ENCODE measurements at regions of chr5 and their contacts with region 1.

Region 1: DNA sequence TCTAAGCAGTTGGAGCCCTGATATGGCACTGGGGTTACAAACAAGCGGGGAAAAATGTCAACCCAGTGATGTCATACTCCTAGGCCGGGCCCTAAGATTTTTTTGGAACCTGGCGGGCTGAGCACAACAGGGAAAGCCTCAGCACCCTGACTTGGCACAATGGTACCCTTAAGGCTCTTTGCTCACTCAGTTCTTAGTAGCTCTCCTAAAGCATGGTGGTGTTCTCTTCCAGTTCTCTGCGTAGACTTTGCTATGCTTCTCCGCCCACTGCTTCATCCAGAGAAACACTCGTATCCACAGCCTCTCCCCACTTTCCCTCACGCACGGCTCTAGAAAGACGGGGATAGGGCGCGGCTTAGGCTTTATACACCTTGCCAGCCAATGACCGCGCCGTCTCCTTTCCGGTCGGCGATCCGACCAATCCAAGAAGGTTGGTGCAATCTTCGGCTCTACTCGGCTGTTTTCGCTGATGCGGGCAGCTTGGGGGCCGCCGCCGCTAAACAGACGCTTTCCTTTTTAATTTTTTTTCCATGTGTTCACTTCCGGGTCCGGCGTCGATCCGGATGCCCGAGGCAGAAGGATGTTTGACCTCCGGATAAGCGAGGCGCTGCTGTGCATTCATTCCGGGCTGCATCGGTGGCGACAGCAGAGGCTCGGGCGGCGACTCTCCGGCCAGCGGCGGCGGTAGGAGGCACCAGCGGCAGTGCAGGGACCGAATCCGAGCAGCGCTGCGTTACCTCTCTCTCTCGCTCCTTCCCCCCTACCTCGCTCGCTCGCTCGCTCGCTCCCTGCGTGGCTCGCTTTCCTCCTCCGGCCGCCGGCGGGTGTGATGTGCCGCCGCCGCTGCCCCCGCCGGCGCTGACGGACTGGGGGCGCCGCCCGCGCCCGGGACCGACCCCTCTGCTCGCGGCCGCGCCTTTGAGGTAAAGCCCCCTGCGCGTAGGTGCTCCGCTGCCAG is at the start of gene CSNK1G3:
- DNase-seq: peak; percentile 88 to 95
- ATAC-seq: peak; percentile 86 to 94 (median 89)
- H3K4me3 ChIP-seq: peak within 1 kb of the TSS; percentile 83
- H3K4me3 Mint-ChIP-seq: peak within 1 kb of the TSS; percentile 99
- H3K27ac ChIP-seq: peak within 1 kb of the TSS; percentile 91
- H3K27ac Mint-ChIP-seq: peak within 1 kb of the TSS; percentile 97 to 98
- H3K4me1 ChIP-seq: peaks cover 9% of the 10 kb centered on the region
- H3K4me1 Mint-ChIP-seq: peaks cover 46 to 48% of the 10 kb centered on the region in 2 donors
- H3K27me3 ChIP-seq: no peaks in the 10 kb centered on the region
- H3K27me3 Mint-ChIP-seq: peaks cover 3 to 8% of the 10 kb centered on the region in 2 donors
- CTCF ChIP-seq: no peak
- total RNA-seq, gene CSNK1G3: 96.7 to 111 (median 101) TPM

Region 2: GRCh38 chr5:123180178-123180577 is 331.7 kb before region 1 on chr5:
- intact Hi-C with region 1: no loop called
- DNase-seq: no peak
- ATAC-seq: no peak
- H3K4me3 ChIP-seq: no peak overlapping the region
- H3K4me3 Mint-ChIP-seq: no peak overlapping the region
- H3K27ac ChIP-seq: no peak overlapping the region
- H3K27ac Mint-ChIP-seq: no peak overlapping the region
- H3K4me1 ChIP-seq: no peaks in the 10 kb centered on the region
- H3K4me1 Mint-ChIP-seq: no peaks in the 10 kb centered on the region
- H3K27me3 ChIP-seq: no peaks in the 10 kb centered on the region
- H3K27me3 Mint-ChIP-seq: no peaks in the 10 kb centered on the region
- CTCF ChIP-seq: no peak

Region 3: GRCh38 chr5:123527190-123527589 is 15.3 kb after region 1 on chr5:
- intact Hi-C with region 1: no loop called
- DNase-seq: no peak
- ATAC-seq: no peak
- H3K4me3 ChIP-seq: no peak overlapping the region
- H3K4me3 Mint-ChIP-seq: no peak overlapping the region
- H3K27ac ChIP-seq: no peak overlapping the region
- H3K27ac Mint-ChIP-seq: peak overlapping the region; percentile 41 to 63
- H3K4me1 ChIP-seq: peaks cover 4% of the 10 kb centered on the region
- H3K4me1 Mint-ChIP-seq: peaks cover 54 to 56% of the 10 kb centered on the region in 2 donors
- H3K27me3 ChIP-seq: no peaks in the 10 kb centered on the region
- H3K27me3 Mint-ChIP-seq: no peaks in the 10 kb centered on the region
- CTCF ChIP-seq: no peak

Region 4: DNA sequence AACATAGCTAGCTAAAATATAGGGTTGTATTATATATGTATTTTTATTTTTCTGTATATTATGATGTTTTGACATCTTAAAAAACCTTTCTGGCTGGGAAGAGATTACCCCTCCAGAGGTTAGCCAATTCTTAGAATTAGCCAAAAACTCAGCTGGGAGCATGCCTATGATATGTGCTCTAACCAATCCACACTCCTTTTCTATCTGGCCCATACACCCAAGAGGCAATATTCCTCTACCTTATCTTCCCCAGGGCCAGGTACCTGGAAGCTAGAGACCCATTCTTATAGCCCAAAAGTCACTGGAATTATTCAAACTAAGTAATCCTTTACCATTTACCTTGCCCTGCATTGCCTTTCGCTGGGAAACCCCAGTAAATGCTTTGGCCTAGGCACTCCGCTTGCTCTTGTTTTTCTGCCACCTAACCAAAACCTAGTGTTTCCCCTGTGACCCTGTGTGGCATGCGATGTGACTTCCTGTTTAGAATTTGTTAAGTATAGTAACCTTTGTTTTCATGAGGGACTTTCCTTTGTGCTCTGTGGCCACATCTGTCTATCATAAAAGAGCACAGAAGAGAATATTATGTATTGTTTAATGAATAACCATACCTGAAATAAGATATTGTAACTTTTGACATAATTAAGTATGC is 37.5 kb after region 1 on chr5:
- intact Hi-C with region 1: loop called (anchors 1 kb)
- DNase-seq: peak; percentile 64 to 90
- ATAC-seq: peak; percentile 95 to 98 (median 97)
- H3K4me3 ChIP-seq: no peak overlapping the region
- H3K4me3 Mint-ChIP-seq: peak overlapping the region; percentile 55
- H3K27ac ChIP-seq: peak overlapping the region; percentile 88
- H3K27ac Mint-ChIP-seq: peak overlapping the region; percentile 96 to 97
- H3K4me1 ChIP-seq: peaks cover 20% of the 10 kb centered on the region
- H3K4me1 Mint-ChIP-seq: peaks cover 23 to 51% of the 10 kb centered on the region in 2 donors
- H3K27me3 ChIP-seq: no peaks in the 10 kb centered on the region
- H3K27me3 Mint-ChIP-seq: no peaks in the 10 kb centered on the region
- CTCF ChIP-seq: no peak

Region 5: DNA sequence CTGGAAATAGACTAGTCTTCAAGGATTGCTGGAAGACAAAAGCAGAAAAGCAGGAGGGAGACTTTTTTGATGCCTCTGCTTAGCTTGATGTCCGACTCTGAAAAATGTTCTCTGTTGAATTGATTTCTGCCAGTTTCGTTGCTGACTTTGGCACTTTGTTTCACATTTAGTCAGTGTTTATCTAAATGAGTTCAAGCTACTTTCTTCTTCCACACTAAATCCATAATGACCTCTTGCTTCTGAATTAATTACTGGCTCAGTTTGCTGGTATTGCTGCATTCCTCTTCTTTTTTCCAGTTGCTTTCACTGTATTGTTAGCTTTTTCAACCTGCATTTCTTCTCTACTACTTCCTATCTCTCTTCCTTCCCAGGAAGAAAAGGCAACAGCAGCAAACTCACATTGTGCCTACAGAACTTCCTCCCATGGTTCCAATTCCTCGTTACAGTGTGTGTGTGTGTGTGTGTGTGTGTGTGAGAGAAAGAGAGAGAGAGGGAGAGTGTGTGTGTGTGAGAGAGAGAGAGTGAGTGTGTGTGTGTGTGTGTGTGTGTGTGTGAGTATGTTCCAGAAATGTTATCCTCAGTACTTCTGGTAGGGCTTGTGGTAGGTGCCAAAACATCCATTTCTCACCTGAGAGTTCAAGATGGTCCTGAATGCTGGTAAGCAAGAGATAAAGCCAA is 234.9 kb after region 1 on chr5:
- intact Hi-C with region 1: no loop called
- DNase-seq: no peak
- ATAC-seq: no peak
- H3K4me3 ChIP-seq: no peak overlapping the region
- H3K4me3 Mint-ChIP-seq: no peak overlapping the region
- H3K27ac ChIP-seq: no peak overlapping the region
- H3K27ac Mint-ChIP-seq: no peak overlapping the region
- H3K4me1 ChIP-seq: no peaks in the 10 kb centered on the region
- H3K4me1 Mint-ChIP-seq: no peaks in the 10 kb centered on the region
- H3K27me3 ChIP-seq: no peaks in the 10 kb centered on the region
- H3K27me3 Mint-ChIP-seq: no peaks in the 10 kb centered on the region
- CTCF ChIP-seq: no peak

Region 6: GRCh38 chr5:124220418-124220817 is 708.5 kb after region 1 on chr5:
- intact Hi-C with region 1: no loop called
- DNase-seq: no peak
- ATAC-seq: no peak
- H3K4me3 ChIP-seq: no peak overlapping the region
- H3K4me3 Mint-ChIP-seq: no peak overlapping the region
- H3K27ac ChIP-seq: no peak overlapping the region
- H3K27ac Mint-ChIP-seq: no peak overlapping the region
- H3K4me1 ChIP-seq: no peaks in the 10 kb centered on the region
- H3K4me1 Mint-ChIP-seq: no peaks in the 10 kb centered on the region
- H3K27me3 ChIP-seq: no peaks in the 10 kb centered on the region
- H3K27me3 Mint-ChIP-seq: no peaks in the 10 kb centered on the region
- CTCF ChIP-seq: no peak

Measured in natural killer cell (primary cell).